Breast epithelium (tissue), 4 donors: ENCODE measurements at regions of chr7 and their contacts with region 1.

Region 1: DNA sequence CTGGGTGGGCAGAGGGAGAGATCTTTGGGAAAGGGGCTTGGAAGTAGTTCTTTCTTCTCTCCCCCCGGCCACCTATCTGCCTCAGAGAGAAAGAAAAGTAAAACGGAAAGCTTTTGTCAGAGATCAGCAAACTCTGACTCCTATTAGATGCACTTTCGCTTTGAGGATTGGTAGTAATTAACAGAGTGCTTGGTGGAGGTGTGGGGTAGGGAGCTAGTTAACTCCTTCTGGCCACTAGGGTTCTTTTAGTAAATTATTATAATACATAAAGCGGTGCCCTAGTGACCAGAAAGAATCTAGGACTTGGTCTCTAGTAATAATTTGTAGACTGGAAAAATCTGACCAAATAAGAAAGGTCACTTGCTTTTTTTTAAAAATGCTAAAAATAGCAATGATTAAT is 54.6 kb downstream of the CPVL start:
- DNase-seq: no peak
- H3K4me3 ChIP-seq: peak overlapping the region; percentile 10 to 56 (median 43)
- H3K27ac ChIP-seq: peak overlapping the region; percentile 80 to 88
- H3K4me1 ChIP-seq: peaks cover 0 to 3% of the 10 kb centered on the region in 2 donors
- H3K27me3 ChIP-seq: no peaks in the 10 kb centered on the region
- CTCF ChIP-seq: no peak
- POLR2A ChIP-seq: no peak

Region 2: GRCh38 chr7:28926871-28927597 is 164.7 kb before region 1 on chr7:
- intact Hi-C with region 1: loop called (anchors 10 kb)
- DNase-seq: peak; percentile 62 to 76
- H3K4me3 ChIP-seq: peak overlapping the region; percentile 51 to 62 (median 53)
- H3K27ac ChIP-seq: peak overlapping the region in 1 of 2 donors; percentile 39
- H3K4me1 ChIP-seq: no peaks in the 10 kb centered on the region
- H3K27me3 ChIP-seq: no peaks in the 10 kb centered on the region
- CTCF ChIP-seq: peak; percentile 77 to 82 (median 79)
- POLR2A ChIP-seq: no peak

Region 3: GRCh38 chr7:29033584-29033983 is 58.1 kb before region 1 on chr7:
- intact Hi-C with region 1: loop called (anchors 2 kb)
- DNase-seq: no peak
- H3K4me3 ChIP-seq: no peak overlapping the region
- H3K27ac ChIP-seq: peak overlapping the region; percentile 14 to 17
- H3K4me1 ChIP-seq: no peaks in the 10 kb centered on the region
- H3K27me3 ChIP-seq: no peaks in the 10 kb centered on the region
- CTCF ChIP-seq: no peak
- POLR2A ChIP-seq: no peak